ENCODE measurements at regions of chr11 and their contacts with region 1.

Region 1: DNA sequence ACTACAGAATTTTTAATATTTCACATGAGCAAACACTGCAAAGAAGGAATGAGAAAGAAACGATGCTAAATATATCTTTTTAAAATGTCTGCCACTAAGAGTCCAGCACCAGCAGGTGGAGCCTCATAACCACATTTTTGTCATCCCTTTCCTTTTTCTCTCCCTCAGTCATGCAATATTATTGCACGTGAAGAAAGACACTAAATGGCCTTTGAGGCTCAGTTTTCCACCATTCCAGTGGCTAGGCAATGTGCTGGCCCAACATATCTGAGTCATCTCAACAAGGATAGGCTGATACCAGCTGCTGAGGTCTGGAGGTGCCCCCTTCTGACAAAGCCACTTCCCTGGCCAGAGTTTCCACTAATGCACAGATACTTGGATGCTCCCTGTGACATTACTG is 1.8 kb downstream of the ALKBH8 start:
- DNase-seq: peak in 2 of 5 donors; percentile 15 to 25
- ATAC-seq: peak in 1 of 4 donors; percentile 36
- H3K4me3 ChIP-seq: peak overlapping the region in 2 of 12 donors; percentile 9 to 22
- H3K27ac ChIP-seq: peak overlapping the region in 2 of 12 donors; percentile 13 to 44
- H3K4me1 ChIP-seq: peaks cover 0 to 29% (median 21%) of the 10 kb centered on the region in 12 donors
- H3K27me3 ChIP-seq: no peaks in the 10 kb centered on the region
- CTCF ChIP-seq: peak; percentile 22 to 71 (median 52)
- POLR2A ChIP-seq: no peak

Region 2: GRCh38 chr11:107689317-107690202 is 125.9 kb after region 1 on chr11:
- intact Hi-C with region 1: loop called in 3 of 10 experiments (anchors 5 kb)
- DNase-seq: peak in 4 of 5 donors; percentile 47 to 63 (median 58)
- ATAC-seq: peak; percentile 37 to 80 (median 76)
- H3K4me3 ChIP-seq: peak overlapping the region in 2 of 12 donors; percentile 19 to 31
- H3K27ac ChIP-seq: no peak overlapping the region
- H3K4me1 ChIP-seq: peaks cover 0 to 7% (median 0%) of the 10 kb centered on the region in 12 donors
- H3K27me3 ChIP-seq: peaks cover 0 to 2% (median 0%) of the 10 kb centered on the region in 9 donors
- CTCF ChIP-seq: peak; percentile 28 to 75 (median 64)
- POLR2A ChIP-seq: no peak